ENCODE measurements at regions of chr16 and their contacts with region 1.

Region 1: DNA sequence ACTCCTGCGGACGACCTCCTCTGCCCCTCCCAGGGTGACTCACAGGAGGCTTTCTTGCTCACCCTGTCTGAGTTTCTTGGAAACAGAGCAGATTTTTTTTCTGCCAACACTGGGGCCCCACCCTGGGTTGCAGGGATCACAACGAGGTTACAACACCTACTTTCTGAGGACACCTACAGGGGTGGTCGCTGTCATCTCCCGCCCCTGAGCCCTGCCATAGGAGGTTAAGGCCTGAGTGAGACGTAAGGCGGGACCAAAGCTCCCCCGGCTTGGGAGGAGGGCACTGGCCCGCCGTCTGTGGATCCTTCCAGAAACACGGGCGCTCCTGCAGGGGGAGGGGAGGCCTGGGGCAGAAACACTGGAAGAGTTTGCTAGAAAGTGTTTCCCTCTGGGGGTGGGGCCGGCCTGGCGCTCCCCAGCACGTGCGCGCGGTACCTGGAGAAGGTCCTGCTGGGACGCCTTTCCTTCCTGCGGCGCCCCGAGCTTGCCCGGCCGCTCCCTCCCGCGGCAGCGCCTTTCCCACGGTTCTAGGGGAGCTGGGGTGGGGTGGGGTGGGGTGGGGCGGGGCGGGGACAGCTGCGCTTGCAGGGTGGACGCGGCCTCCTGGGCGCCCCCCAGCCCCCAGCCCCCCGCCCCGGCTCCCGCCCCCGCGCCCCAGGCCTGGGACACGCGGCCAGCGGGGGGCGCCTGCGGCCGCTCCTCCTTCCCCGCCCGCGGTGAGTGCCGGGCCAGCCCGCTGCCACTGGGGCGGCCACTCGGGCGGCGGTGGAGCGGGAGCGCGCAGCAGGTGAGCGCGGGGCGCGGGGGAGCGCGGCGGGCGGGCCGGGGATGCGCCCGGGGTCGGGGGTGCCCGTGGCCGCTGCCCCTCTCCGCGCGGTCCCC is 20.7 kb upstream of the ADCY7 start:
- DNase-seq: peak; percentile 91
- H3K4me3 ChIP-seq: peak overlapping the region; percentile 36 to 80 (median 56)
- H3K27ac ChIP-seq: peak overlapping the region in 3 of 8 donors; percentile 23 to 66 (median 27)
- H3K4me1 ChIP-seq: peaks cover 7 to 40% (median 25%) of the 10 kb centered on the region in 6 donors
- H3K27me3 ChIP-seq: peaks cover 0 to 5% (median 0%) of the 10 kb centered on the region in 7 donors
- CTCF ChIP-seq: peak in 6 of 11 experiments; percentile 24 to 65 (median 48)
- POLR2A ChIP-seq: no peak

Region 2: GRCh38 chr16:49890876-49891275 is 354.8 kb before region 1 on chr16:
- intact Hi-C with region 1: no loop called
- DNase-seq: no peak
- H3K4me3 ChIP-seq: no peak overlapping the region
- H3K27ac ChIP-seq: no peak overlapping the region
- H3K4me1 ChIP-seq: no peaks in the 10 kb centered on the region
- H3K27me3 ChIP-seq: peaks cover 0 to 19% (median 0%) of the 10 kb centered on the region in 7 donors
- CTCF ChIP-seq: peak in 2 of 11 experiments; percentile 16 to 34
- POLR2A ChIP-seq: no peak

Region 3: GRCh38 chr16:50354629-50355456 is 109.2 kb after region 1 on chr16:
- intact Hi-C with region 1: loop called (anchors 10 kb)
- DNase-seq: no peak
- H3K4me3 ChIP-seq: no peak overlapping the region
- H3K27ac ChIP-seq: no peak overlapping the region
- H3K4me1 ChIP-seq: peaks cover 0 to 23% (median 5%) of the 10 kb centered on the region in 6 donors
- H3K27me3 ChIP-seq: no peaks in the 10 kb centered on the region
- CTCF ChIP-seq: peak; percentile 28 to 71 (median 62)
- POLR2A ChIP-seq: no peak

Region 4: GRCh38 chr16:50368410-50369132 is 122.9 kb after region 1 on chr16 and contains the start of gene BRD7:
- intact Hi-C with region 1: no loop called
- DNase-seq: peak; percentile 92
- H3K4me3 ChIP-seq: peak within 1 kb of the TSS; percentile 86 to 100 (median 96)
- H3K27ac ChIP-seq: peak within 1 kb of the TSS; percentile 60 to 89 (median 78)
- H3K4me1 ChIP-seq: peaks cover 25 to 57% (median 42%) of the 10 kb centered on the region in 6 donors
- H3K27me3 ChIP-seq: no peaks in the 10 kb centered on the region
- CTCF ChIP-seq: peak in 7 of 11 experiments; percentile 49 to 88 (median 69)
- POLR2A ChIP-seq: no peak
- total RNA-seq, gene BRD7: 47.4 to 69.7 (median 59.1) TPM

Measured in spleen (tissue), 13 donors.